ENCODE measurements at regions of chr5 and their contacts with region 1.

Region 1: DNA sequence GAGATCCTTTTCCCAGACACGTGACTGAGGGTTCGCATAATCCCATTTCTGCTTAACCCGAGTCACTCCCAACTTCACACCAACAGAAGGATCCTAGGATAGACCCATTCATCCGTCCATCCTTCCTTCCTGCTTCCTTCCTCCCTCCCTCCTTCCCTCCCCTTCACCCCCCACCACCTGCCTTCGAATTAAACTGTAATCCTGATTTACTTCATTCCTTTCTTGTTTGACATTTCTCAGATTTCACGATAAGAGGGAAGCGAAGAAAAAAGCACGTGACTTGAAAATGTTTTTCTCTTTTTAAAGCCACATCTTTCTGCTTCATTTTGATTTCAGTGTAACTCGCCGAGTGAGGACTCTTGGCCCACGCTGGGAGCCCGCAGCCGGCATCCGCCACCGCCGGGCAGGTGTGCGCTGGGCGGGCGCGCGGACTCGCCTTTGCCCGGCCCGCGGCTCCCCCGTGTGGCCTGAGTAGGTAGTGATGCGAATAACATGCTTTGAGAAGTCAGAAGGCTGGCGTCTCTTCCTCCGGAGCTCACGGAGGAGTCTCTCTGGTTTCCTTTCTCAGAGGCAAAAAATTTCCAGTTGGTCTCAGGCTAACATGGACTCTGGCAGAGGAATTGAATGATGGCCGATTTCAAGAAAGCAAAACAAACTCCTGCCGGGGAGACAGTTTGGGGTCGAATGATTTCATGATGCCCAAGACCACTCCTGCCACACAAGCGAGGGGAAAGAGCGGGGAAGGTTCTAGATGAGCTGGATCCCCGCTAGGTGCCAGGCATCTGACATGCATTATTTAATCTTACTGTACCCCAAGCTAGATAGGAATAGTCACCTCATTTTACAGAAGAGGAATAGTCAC is 117.7 kb downstream of the SLC12A2 start:
- DNase-seq: peak; percentile 23
- ATAC-seq: peak; percentile 98
- H3K4me3 ChIP-seq: no peak overlapping the region; a peak in 1 of 6 replicates
- H3K27ac ChIP-seq: no peak overlapping the region
- H3K4me1 ChIP-seq: 0 out of 2 replicates have a peak, but pooled peaks cover 5% of the 10 kb centered on the region
- H3K27me3 ChIP-seq: peaks cover 0 to 3% of the 10 kb centered on the region in 2 experiments; a peak in 1 of 5 replicates
- CTCF ChIP-seq: peak; percentile 85
- EP300 ChIP-seq: no peak
- POLR2A ChIP-seq: no peak
- RAD21 ChIP-seq: peak; percentile 87

Region 2: DNA sequence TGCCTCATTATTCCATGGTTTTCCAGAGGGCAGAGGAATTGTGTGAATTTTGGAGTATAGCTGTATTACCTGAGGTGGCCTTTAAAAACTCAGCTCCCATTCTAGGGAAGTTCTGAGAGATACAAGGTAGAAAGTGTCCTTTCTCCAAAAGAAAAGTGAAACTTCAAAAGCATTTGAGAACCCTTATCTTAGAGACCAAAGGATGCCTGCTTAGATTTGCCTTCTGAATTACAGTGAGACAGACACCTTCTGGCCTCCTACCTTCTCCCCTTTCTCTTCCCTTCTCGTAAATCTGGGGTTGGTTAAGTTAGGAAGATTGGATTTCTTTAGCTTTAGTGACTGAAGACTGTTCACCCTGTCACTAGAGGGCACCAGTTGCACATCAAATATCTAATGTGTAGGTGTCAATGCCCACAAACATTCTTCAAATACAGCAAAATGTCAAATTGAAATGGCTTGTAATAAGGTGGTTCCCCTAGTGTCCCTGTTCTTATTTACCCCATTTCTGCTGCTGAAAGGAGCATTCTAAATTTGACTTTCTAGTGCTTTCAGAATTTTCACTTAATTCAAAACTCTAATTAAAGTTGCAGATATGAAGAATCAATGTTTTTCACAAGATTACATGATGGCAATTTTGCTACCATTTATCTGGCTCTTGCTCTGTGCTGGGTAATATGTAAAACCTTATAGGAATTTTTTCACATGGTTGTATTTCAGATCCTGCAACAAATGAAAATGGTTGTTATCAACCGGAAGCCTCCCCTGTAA is 637.1 kb before region 1 on chr5:
- CTCF ChIA-PET with region 1: interaction called, 13 read pairs
- POLR2A ChIA-PET with region 1: no interaction called
- in situ Hi-C with region 1: loop called (anchors 5 kb)
- intact Hi-C with region 1: loop called (anchors 1 kb)
- DNase-seq: peak; percentile 57
- ATAC-seq: peak; percentile 85
- H3K4me3 ChIP-seq: no peak overlapping the region
- H3K27ac ChIP-seq: no peak overlapping the region
- H3K4me1 ChIP-seq: no peaks in the 10 kb centered on the region
- H3K27me3 ChIP-seq: peaks cover 0 to 3% of the 10 kb centered on the region in 2 experiments; a peak in 2 of 5 replicates
- CTCF ChIP-seq: peak; percentile 80
- EP300 ChIP-seq: no peak
- POLR2A ChIP-seq: no peak
- RAD21 ChIP-seq: 0 out of 2 replicates have a peak, but pooled peaks have one; percentile 23

Region 3: DNA sequence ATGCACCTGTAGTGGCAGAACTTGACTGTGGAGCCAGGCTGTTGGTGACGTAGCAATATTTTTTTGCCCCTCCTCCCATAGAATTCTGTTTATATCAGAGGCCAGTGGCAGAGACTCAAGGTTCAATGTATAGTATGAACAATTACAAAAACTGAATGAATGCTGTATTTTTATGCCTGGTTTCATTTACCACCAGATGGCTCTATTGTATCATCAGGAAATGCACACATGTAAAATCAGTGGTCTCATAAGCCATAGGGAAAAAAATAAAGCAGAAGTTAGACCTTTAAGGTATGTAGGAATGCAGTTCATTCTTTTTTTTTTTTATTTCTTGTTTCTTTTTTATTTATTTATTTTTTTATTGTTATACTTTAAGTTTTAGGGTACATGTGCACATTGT is 454.5 kb before region 1 on chr5:
- CTCF ChIA-PET with region 1: interaction called, 4 read pairs
- POLR2A ChIA-PET with region 1: no interaction called
- in situ Hi-C with region 1: loop called (anchors 10 kb)
- intact Hi-C with region 1: loop called (anchors 1 kb)
- DNase-seq: no peak
- ATAC-seq: no peak
- H3K4me3 ChIP-seq: no peak overlapping the region
- H3K27ac ChIP-seq: no peak overlapping the region
- H3K4me1 ChIP-seq: no peaks in the 10 kb centered on the region
- H3K27me3 ChIP-seq: no peaks in the 10 kb centered on the region
- CTCF ChIP-seq: peak; percentile 37
- EP300 ChIP-seq: no peak
- POLR2A ChIP-seq: no peak
- RAD21 ChIP-seq: no peak

Region 4: DNA sequence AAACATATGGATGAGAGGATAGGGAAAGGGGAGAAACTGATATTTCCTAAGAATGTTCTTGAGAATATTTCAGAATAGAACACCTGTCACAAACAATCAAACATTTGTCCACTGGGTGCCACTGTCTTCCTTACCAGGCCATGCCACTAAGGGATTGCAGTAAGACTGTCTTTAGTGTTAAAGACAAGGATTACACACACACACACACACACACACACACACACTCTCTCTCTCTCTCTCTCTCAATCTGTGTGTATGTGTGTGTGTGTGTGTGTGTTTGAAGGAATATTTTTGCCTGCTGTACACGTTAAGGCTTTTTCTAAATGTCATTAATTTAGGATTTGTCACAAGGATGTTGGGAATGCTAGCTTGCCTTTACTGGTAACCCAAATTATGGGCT is 443.7 kb before region 1 on chr5:
- CTCF ChIA-PET with region 1: no interaction called
- POLR2A ChIA-PET with region 1: no interaction called
- in situ Hi-C with region 1: loop called (anchors 10 kb)
- intact Hi-C with region 1: no loop called
- DNase-seq: no peak
- ATAC-seq: peak; percentile 60
- H3K4me3 ChIP-seq: no peak overlapping the region
- H3K27ac ChIP-seq: no peak overlapping the region
- H3K4me1 ChIP-seq: no peaks in the 10 kb centered on the region
- H3K27me3 ChIP-seq: no peaks in the 10 kb centered on the region
- CTCF ChIP-seq: peak; percentile 38
- EP300 ChIP-seq: no peak
- POLR2A ChIP-seq: no peak
- RAD21 ChIP-seq: no peak

Region 5: GRCh38 chr5:127875235-127876021 is 325.9 kb before region 1 on chr5:
- CTCF ChIA-PET with region 1: interaction called, 27 read pairs
- POLR2A ChIA-PET with region 1: no interaction called
- in situ Hi-C with region 1: loop called (anchors 5 kb)
- intact Hi-C with region 1: loop called (anchors 1 kb)
- DNase-seq: peak; percentile 75
- ATAC-seq: peak; percentile 98
- H3K4me3 ChIP-seq: no peak overlapping the region
- H3K27ac ChIP-seq: no peak overlapping the region
- H3K4me1 ChIP-seq: peaks cover 9% of the 10 kb centered on the region
- H3K27me3 ChIP-seq: no peaks in the 10 kb centered on the region
- CTCF ChIP-seq: peak; percentile 80
- EP300 ChIP-seq: no peak
- POLR2A ChIP-seq: no peak
- RAD21 ChIP-seq: peak; percentile 66

Region 6: DNA sequence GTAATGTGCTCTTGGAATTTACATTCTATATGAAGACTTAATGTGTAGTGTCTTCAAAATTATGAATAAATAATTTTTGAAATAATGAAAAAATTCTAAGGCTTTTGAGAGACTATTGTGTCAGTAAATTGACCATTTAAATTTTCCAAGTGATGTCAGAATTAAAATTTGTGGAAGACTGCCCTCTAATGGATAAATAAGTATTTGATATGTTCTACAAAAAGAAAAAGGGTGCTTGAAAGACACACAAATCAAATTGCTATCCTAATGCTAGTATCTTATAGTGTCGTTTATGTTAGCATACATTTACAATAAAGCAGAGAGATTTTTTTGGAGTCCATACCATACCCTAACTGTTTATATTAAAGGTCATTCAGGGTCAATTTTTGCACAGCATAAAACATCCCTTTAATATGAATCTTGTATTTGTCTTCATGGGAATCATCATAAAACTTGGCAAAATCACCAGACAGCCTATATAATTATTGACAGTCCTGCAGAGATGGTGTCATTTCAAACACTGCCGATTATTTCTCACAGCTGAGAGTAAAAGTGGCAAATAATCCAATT is 643.1 kb after region 1 on chr5:
- CTCF ChIA-PET with region 1: no interaction called
- POLR2A ChIA-PET with region 1: no interaction called
- in situ Hi-C with region 1: loop called (anchors 25 kb)
- intact Hi-C with region 1: no loop called
- DNase-seq: no peak
- ATAC-seq: no peak
- H3K4me3 ChIP-seq: no peak overlapping the region
- H3K27ac ChIP-seq: no peak overlapping the region
- H3K4me1 ChIP-seq: no peaks in the 10 kb centered on the region
- H3K27me3 ChIP-seq: no peaks in the 10 kb centered on the region
- CTCF ChIP-seq: no peak
- EP300 ChIP-seq: no peak
- POLR2A ChIP-seq: no peak
- RAD21 ChIP-seq: no peak

Region 7: DNA sequence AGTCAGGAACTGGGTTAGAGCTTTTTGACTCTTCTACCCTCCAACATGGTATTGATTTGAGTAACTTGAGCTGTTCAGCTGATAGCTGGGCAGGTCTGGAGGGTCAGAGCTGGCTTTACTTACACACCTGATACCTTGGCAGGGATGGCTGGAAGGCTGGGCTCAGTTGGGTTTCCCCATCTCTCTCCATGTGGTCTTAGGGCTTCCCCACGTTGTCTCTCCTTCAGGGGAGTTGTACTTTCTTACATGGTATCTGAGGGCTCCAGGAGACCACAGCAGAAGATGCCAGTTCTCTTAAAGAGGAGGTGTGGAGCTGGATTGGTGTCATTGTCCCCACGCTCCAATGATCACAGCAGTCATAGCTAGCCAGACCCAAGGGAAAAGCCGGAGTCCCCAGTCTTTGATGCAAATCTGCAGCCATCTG is 918.9 kb after region 1 on chr5:
- CTCF ChIA-PET with region 1: no interaction called
- POLR2A ChIA-PET with region 1: no interaction called
- in situ Hi-C with region 1: loop called (anchors 25 kb)
- intact Hi-C with region 1: no loop called
- DNase-seq: no peak
- ATAC-seq: no peak; the same call in 2 of the 3 replicates
- H3K4me3 ChIP-seq: no peak overlapping the region
- H3K27ac ChIP-seq: no peak overlapping the region
- H3K4me1 ChIP-seq: no peaks in the 10 kb centered on the region
- H3K27me3 ChIP-seq: no peaks in the 10 kb centered on the region
- CTCF ChIP-seq: no peak
- EP300 ChIP-seq: no peak
- POLR2A ChIP-seq: no peak
- RAD21 ChIP-seq: no peak

Measured in HepG2 (cell line).